ENCODE measurements at regions of chr1 and their contacts with region 1.

Region 1: DNA sequence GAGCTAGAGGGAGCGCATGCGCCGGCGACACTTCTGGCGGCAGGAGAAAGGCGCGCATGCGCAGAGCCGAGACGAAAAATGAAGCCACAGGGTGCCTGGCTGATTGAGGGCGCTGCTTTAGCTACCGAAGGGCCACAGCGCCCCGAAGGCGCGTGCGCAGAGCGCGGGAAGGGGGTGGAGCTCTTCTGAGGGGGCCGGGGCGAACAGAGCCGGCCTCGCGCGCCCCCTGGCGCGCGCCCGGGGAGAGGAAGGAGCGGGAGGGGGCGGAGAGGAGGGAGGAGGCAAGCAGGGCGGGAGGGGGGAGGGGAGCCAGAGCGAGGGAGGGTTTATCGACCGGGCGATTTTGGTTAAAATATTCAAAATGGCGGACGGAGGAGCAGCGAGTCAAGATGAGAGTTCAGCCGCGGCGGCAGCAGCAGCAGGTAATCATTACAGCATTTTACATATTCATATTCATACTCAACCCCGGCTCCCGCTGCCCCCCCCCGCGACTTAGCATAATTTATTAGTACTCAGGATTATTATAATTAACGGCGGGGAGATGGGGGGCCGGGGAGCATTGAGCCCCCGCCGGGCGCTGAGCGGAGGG is at the start of gene POU2F1:
- DNase-seq: peak; percentile 98
- H3K4me3 Mint-ChIP-seq: peak within 1 kb of the TSS; percentile 91
- H3K27ac Mint-ChIP-seq: peak within 1 kb of the TSS; percentile 93
- H3K4me1 Mint-ChIP-seq: peaks cover 27% of the 10 kb centered on the region
- H3K27me3 Mint-ChIP-seq: peaks cover 3% of the 10 kb centered on the region
- total RNA-seq, gene POU2F1: 21.3 and 21.9 TPM in 2 replicates

Region 2: DNA sequence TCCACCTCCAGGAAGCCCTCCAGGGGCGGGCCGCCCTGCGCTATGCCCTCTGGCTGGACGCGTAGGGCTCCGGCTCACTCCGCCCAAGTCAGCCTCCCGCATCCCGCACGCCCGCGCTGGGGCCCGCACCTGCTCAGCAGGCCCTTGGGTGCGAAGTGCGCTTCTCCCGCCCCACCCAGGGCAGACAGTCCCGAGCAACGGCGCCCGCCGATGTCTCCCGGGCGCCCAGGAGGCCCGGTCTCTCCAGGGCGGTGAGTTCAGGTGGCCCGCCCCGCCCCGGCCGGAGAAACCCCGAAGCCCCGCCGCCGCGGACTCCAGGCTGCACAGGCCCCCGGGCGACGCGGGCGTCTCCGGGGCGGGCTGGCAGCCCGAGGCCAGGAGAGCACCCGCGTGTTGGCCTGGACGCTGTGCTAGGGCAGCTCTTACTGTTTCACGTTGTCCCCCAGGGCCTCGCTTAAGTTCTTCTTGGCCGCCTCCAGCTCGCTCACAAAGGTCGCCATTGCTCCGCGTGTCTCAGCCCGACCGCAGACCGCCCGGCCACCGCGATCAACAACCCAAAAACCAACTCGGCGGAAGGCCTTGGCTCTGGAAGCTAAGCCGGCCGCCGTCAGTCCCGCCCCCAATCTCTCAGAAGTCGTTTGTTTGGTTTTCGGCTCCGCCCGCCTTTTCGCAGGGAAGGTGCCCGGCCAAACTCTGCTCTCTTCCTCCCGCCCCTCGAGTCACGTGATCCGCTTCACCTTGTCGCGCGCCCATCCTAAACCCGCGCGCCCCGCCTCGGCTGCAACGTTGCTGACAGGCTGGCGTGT is 344.7 kb before region 1 on chr1 and contains the start of gene TADA1:
- intact Hi-C with region 1: loop called (anchors 1 kb)
- DNase-seq: peak; percentile 98
- H3K4me3 Mint-ChIP-seq: peak within 1 kb of the TSS; percentile 96
- H3K27ac Mint-ChIP-seq: peak within 1 kb of the TSS; percentile 99
- H3K4me1 Mint-ChIP-seq: peaks cover 45% of the 10 kb centered on the region
- H3K27me3 Mint-ChIP-seq: peaks cover 2% of the 10 kb centered on the region
- total RNA-seq, gene TADA1: 15.3 and 16.0 TPM in 2 replicates

Region 3: GRCh38 chr1:166975361-166976129 is 245.1 kb before region 1 on chr1 and contains the start of gene ILDR2:
- intact Hi-C with region 1: loop called (anchors 10 kb)
- DNase-seq: peak; percentile 54
- H3K4me3 Mint-ChIP-seq: peak within 1 kb of the TSS; percentile 97
- H3K27ac Mint-ChIP-seq: peak within 1 kb of the TSS; percentile 88
- H3K4me1 Mint-ChIP-seq: peaks cover 54% of the 10 kb centered on the region
- H3K27me3 Mint-ChIP-seq: peaks cover 18% of the 10 kb centered on the region
- total RNA-seq, gene ILDR2: 18.5 and 22.8 TPM in 2 replicates

Region 4: GRCh38 chr1:167263819-167264464 is 43.3 kb after region 1 on chr1:
- intact Hi-C with region 1: loop called (anchors 2 kb)
- DNase-seq: no peak
- H3K4me3 Mint-ChIP-seq: no peak overlapping the region
- H3K27ac Mint-ChIP-seq: no peak overlapping the region
- H3K4me1 Mint-ChIP-seq: peaks cover 24% of the 10 kb centered on the region
- H3K27me3 Mint-ChIP-seq: no peaks in the 10 kb centered on the region

Region 5: GRCh38 chr1:167517535-167518330 is 297.1 kb after region 1 on chr1:
- intact Hi-C with region 1: loop called (anchors 1 kb)
- DNase-seq: peak; percentile 72
- H3K4me3 Mint-ChIP-seq: peak overlapping the region; percentile 95
- H3K27ac Mint-ChIP-seq: peak overlapping the region; percentile 99
- H3K4me1 Mint-ChIP-seq: peaks cover 38% of the 10 kb centered on the region
- H3K27me3 Mint-ChIP-seq: peaks cover 6% of the 10 kb centered on the region

Region 6: GRCh38 chr1:167627865-167628641 is 407.4 kb after region 1 on chr1:
- intact Hi-C with region 1: loop called (anchors 2 kb)
- DNase-seq: peak; percentile 84
- H3K4me3 Mint-ChIP-seq: peak overlapping the region; percentile 96
- H3K27ac Mint-ChIP-seq: peak overlapping the region; percentile 95
- H3K4me1 Mint-ChIP-seq: peaks cover 55% of the 10 kb centered on the region
- H3K27me3 Mint-ChIP-seq: no peaks in the 10 kb centered on the region

Measured in activated T-helper 2 cell treated with anti-CD3 and anti-CD28 coated beads, Interferon-gamma antibody, Interleukin-2, Interleukin-4, amounts not matched to agents 10 μg/mL and 5 μg/mL and 100 μg/mL, durations not matched to agents 14 hours and 24 hours and 36 hours (primary cell).